PC-3 (cell line): ENCODE measurements at regions of chr10 and their contacts with region 1.

Region 1: GRCh38 chr10:74953214-74953613 is 126.8 kb downstream of the KAT6B start:
- DNase-seq: peak; percentile 89
- ATAC-seq: peak; percentile 70
- H3K4me3 ChIP-seq: peak overlapping the region; percentile 0; the same call in 1 of the 2 replicates
- H3K27ac ChIP-seq: peak overlapping the region; percentile 1; the same call in 1 of the 2 replicates
- H3K4me1 ChIP-seq: peaks cover 45% of the 10 kb centered on the region
- H3K27me3 ChIP-seq: no peaks in the 10 kb centered on the region
- CTCF ChIP-seq: no peak

Region 2: DNA sequence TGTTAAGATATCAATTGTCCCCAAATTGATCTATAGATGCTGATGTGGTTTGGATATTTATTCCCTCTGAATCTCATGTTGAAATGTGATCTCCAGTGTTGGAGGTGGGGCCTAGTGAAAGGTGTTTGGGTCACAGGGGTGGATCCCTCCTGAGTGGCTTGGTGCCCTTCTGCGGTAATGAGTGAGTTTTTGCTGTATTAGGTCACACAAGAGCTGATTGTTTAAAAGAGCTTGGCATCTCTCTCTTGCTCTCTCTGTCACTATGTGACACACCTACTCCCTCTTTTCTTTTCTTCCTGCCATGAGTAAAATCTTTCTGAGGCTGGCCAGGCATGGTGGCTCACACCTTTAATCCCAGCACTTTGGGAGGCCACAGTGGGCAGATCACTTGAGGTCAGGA is 225.0 kb before region 1 on chr10:
- CTCF ChIA-PET with region 1: no interaction called
- POLR2A ChIA-PET with region 1: no interaction called
- intact Hi-C with region 1: no loop called
- DNase-seq: peak; percentile 91
- ATAC-seq: peak; percentile 88
- H3K4me3 ChIP-seq: no peak overlapping the region
- H3K27ac ChIP-seq: peak overlapping the region; percentile 21; the same call in 1 of the 2 replicates
- H3K4me1 ChIP-seq: no peaks in the 10 kb centered on the region
- H3K27me3 ChIP-seq: no peaks in the 10 kb centered on the region
- CTCF ChIP-seq: no peak

Region 3: GRCh38 chr10:74909670-74910069 is 43.5 kb before region 1 on chr10:
- CTCF ChIA-PET with region 1: no interaction called
- POLR2A ChIA-PET with region 1: no interaction called
- intact Hi-C with region 1: loop called (anchors 1 kb)
- DNase-seq: peak; percentile 96
- ATAC-seq: peak; percentile 94
- H3K4me3 ChIP-seq: no peak overlapping the region
- H3K27ac ChIP-seq: peak overlapping the region; percentile 6
- H3K4me1 ChIP-seq: peaks cover 19% of the 10 kb centered on the region
- H3K27me3 ChIP-seq: no peaks in the 10 kb centered on the region
- CTCF ChIP-seq: no peak

Region 4: DNA sequence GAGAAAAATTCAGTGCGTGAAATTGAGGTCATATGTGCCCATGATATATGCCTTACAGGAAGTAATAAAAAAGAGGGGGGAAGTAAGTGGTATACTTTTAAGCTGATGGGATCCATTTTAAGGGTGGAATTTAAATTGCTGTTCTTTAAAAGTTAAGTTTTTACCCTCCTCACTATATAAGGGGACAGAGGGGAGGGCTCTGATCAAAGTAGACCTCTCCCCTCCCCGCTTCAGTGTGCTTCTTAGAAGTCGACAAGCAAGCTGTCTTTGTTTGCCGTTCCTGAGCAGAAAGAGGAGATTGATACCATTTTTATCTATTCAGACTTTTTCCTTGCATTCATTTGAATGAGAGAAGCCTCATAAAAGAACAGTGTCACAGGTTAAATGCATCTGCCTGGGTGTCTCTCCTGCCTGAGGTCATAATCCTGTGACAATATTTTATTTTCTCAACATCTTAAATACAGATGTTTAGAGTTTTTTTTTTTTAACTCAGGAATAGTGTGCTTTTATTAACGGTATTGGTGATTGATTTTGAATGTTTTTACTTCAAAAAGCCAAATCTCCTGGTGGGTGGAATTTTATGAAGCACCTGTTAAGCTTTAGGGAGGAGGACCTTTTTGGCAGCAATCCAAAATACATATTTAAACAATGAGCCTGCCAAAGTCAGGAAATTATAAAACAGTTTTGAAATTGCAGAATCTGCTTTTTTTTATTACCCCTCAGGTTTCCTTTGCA is 14.9 kb after region 1 on chr10:
- CTCF ChIA-PET with region 1: no interaction called
- POLR2A ChIA-PET with region 1: interaction called, 5 read pairs
- intact Hi-C with region 1: loop called (anchors 1 kb)
- DNase-seq: peak; percentile 100
- ATAC-seq: peak; percentile 73
- H3K4me3 ChIP-seq: peak overlapping the region; percentile 10
- H3K27ac ChIP-seq: peak overlapping the region; percentile 28
- H3K4me1 ChIP-seq: peaks cover 25% of the 10 kb centered on the region
- H3K27me3 ChIP-seq: no peaks in the 10 kb centered on the region
- CTCF ChIP-seq: no peak; the same call in 1 of the 2 replicates